Mammary epithelial cell (primary cell): ENCODE measurements at regions of chr22 and their contacts with region 1.

Region 1: GRCh38 chr22:40024201-40025061 is 29.7 kb downstream of the FAM83F start:
- DNase-seq: peak; percentile 35
- H3K4me3 ChIP-seq: no peak overlapping the region
- H3K27ac ChIP-seq: no peak overlapping the region
- H3K4me1 ChIP-seq: peaks cover 55% of the 10 kb centered on the region
- H3K27me3 ChIP-seq: no peaks in the 10 kb centered on the region
- CTCF ChIP-seq: peak; percentile 66 to 88

Region 2: GRCh38 chr22:39559454-39560105 is 464.9 kb before region 1 on chr22:
- CTCF ChIA-PET with region 1: no interaction called
- dilution Hi-C with region 1: no loop called
- in situ Hi-C with region 1: no loop called
- intact Hi-C with region 1: loop called (anchors 5 kb)
- DNase-seq: no peak
- H3K4me3 ChIP-seq: no peak overlapping the region
- H3K27ac ChIP-seq: no peak overlapping the region
- H3K4me1 ChIP-seq: peaks cover 7% of the 10 kb centered on the region
- H3K27me3 ChIP-seq: peaks cover 12% of the 10 kb centered on the region
- CTCF ChIP-seq: peak; percentile 16 to 55

Region 3: DNA sequence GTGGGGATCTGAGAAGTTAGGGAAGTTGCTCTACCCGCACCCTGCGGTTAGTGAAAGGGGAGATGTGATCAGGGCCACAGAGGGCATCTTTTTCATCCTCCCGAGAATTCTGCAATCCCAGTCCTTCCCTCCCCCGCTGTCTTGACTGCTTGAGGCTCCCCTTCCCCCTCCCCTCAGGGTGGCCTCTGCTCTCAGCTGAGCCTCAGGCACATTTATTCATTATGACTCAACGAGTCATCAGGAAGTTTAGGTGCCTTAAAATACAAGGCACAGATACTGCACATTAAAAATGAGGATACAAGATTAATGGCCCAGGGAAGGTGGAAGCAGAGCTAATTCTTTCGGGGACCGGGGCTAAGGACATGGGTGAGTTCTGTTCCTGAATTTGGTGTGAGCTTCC is 349.9 kb before region 1 on chr22:
- CTCF ChIA-PET with region 1: no interaction called
- dilution Hi-C with region 1: no loop called
- in situ Hi-C with region 1: no loop called
- intact Hi-C with region 1: no loop called
- DNase-seq: peak; percentile 23
- H3K4me3 ChIP-seq: no peak overlapping the region
- H3K27ac ChIP-seq: no peak overlapping the region
- H3K4me1 ChIP-seq: peaks cover 3% of the 10 kb centered on the region
- H3K27me3 ChIP-seq: no peaks in the 10 kb centered on the region
- CTCF ChIP-seq: no peak

Region 4: GRCh38 chr22:39873965-39874364 is 150.5 kb before region 1 on chr22:
- CTCF ChIA-PET with region 1: no interaction called
- dilution Hi-C with region 1: no loop called
- in situ Hi-C with region 1: no loop called
- intact Hi-C with region 1: no loop called
- DNase-seq: peak; percentile 31
- H3K4me3 ChIP-seq: no peak overlapping the region
- H3K27ac ChIP-seq: no peak overlapping the region
- H3K4me1 ChIP-seq: no peaks in the 10 kb centered on the region
- H3K27me3 ChIP-seq: peaks cover 7% of the 10 kb centered on the region
- CTCF ChIP-seq: no peak

Region 5: DNA sequence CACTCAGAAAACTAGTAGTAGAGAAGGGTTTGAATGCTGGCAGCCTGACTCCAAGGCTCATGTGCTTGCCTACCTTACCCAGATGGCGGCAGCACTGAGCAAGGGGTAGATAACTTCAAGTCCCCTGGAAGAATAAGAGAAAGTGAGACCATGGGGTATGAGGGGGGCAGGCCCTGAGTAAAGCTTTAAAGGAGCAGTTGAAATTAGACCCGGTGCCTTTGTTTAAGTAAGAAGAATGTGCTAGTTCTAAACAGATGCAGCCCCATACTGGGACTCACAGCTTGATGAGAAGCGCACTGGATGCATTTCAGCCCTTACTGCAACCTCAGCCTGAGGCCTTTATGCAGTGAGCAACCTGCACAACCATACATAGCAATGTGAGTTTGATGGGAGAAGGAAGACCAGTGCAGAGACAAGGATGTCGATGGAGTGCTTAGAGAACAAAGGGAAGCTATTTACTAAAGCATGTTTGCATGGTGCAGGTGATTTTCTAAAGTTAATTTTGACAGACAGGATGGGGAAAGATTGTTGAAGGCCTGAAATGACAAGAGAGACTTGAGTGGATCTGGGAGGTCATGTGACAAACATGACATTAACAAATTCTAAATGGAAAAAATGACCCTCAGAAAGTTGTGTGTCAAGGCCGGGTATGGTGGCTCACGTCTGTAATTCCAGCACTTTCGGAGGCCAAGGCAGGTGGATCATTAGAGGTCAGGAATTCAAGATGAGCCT is 91.3 kb before region 1 on chr22:
- CTCF ChIA-PET with region 1: no interaction called
- dilution Hi-C with region 1: no loop called
- in situ Hi-C with region 1: no loop called
- intact Hi-C with region 1: loop called (anchors 1 kb)
- DNase-seq: no peak
- H3K4me3 ChIP-seq: no peak overlapping the region
- H3K27ac ChIP-seq: no peak overlapping the region
- H3K4me1 ChIP-seq: peaks cover 14% of the 10 kb centered on the region
- H3K27me3 ChIP-seq: no peaks in the 10 kb centered on the region
- CTCF ChIP-seq: peak; percentile 66 to 75

Region 6: DNA sequence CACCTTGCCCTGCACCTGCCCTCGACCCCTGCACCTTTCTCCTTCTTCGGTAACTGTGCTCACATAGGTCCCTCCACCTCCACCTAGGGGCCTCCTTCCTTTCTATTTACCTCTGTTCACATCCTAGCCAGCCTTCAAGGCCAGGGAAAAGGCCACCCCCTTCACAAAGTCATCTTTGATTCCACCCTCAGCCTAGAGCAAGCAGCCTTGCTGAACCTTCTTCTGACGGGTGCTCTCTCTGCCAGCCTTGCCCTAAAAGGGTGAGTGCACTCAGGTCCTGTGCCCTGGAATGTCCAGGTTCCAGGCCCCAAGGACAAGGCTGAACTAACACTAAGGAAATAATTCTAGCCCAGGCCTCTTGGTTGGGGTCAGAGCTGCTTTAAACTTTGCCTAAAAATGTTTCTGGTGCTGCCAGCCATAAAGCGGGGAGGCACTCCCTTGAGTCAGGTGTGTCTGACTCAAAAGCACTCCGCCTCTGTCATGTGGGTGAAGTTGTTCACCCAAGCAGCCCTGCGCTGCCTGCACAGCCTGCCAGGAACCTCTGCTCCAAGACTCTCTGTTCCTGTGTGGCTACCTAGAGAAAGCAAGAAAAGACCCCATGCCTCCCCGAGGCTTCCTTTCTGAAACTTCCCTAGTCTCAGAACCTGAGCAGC is 38.9 kb before region 1 on chr22:
- CTCF ChIA-PET with region 1: no interaction called
- dilution Hi-C with region 1: no loop called
- in situ Hi-C with region 1: no loop called
- intact Hi-C with region 1: loop called (anchors 5 kb)
- DNase-seq: peak; percentile 68
- H3K4me3 ChIP-seq: no peak overlapping the region
- H3K27ac ChIP-seq: no peak overlapping the region
- H3K4me1 ChIP-seq: peaks cover 25% of the 10 kb centered on the region
- H3K27me3 ChIP-seq: no peaks in the 10 kb centered on the region
- CTCF ChIP-seq: no peak